Endothelial cell of umbilical vein (primary cell): ENCODE measurements at regions of chr10 and their contacts with region 1.

Region 1: DNA sequence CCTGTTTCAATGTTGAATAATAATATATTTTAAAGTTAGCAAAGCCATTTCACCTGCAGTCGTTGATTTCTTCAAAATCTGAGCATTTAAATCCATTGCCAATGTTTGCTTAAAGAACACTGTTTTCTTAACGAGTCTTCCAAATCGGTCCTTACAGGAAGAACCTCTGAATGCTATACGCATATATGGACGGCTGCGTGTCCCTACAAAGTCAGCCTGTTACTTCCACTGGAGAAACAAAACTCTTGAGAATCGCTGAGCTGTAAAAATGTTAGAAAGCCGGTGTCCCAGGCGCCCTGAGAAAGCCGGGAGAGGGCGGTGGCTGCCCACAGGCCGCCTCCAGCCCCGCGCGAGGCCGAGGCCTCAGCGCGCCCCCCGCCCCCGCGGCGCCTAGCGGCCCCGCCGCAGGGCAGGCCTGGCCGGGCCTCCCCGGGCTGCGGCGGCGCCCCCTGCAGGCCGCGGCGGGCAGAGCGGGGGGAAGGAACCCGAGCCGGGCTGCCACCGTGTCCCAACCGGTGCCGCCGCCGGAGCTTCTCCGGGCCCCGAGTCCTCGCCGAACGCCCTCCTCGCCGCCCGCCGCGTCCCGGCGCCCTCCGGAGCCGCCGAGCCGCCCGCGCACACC is at the start of gene FHIP2A:
- DNase-seq: peak; percentile 74
- H3K4me3 ChIP-seq: peak within 1 kb of the TSS; percentile 78 to 96 (median 86)
- H3K27ac ChIP-seq: peak within 1 kb of the TSS; percentile 97
- H3K4me1 ChIP-seq: peaks cover 35% of the 10 kb centered on the region
- H3K27me3 ChIP-seq: no peaks in the 10 kb centered on the region
- CTCF ChIP-seq: peak; percentile 53 to 60
- POLR2A ChIP-seq: peak; percentile 61
- total RNA-seq, gene FHIP2A: 34.8 and 39.6 TPM in 2 replicates

Region 2: GRCh38 chr10:114173921-114174694 is 647.3 kb before region 1 on chr10 and contains the start of gene CCDC186:
- CTCF ChIA-PET with region 1: no interaction called
- POLR2A ChIA-PET with region 1: no interaction called
- dilution Hi-C with region 1: no loop called
- intact Hi-C with region 1: loop called (anchors 5 kb)
- DNase-seq: peak; percentile 93
- H3K4me3 ChIP-seq: peak within 1 kb of the TSS; percentile 39 to 99 (median 66)
- H3K27ac ChIP-seq: peak within 1 kb of the TSS; percentile 49
- H3K4me1 ChIP-seq: peaks cover 18% of the 10 kb centered on the region
- H3K27me3 ChIP-seq: peaks cover 3 to 5% of the 10 kb centered on the region in 2 experiments
- CTCF ChIP-seq: no peak
- POLR2A ChIP-seq: peak; percentile 74
- total RNA-seq, gene CCDC186: 13.4 and 13.9 TPM in 2 replicates

Region 3: GRCh38 chr10:114526504-114527238 is 294.7 kb before region 1 on chr10:
- CTCF ChIA-PET with region 1: no interaction called
- POLR2A ChIA-PET with region 1: no interaction called
- dilution Hi-C with region 1: no loop called
- intact Hi-C with region 1: loop called (anchors 1 kb)
- DNase-seq: peak; percentile 97
- H3K4me3 ChIP-seq: peak overlapping the region in 2 of 3 experiments; percentile 38 to 41
- H3K27ac ChIP-seq: peak overlapping the region; percentile 35
- H3K4me1 ChIP-seq: peaks cover 18% of the 10 kb centered on the region
- H3K27me3 ChIP-seq: no peaks in the 10 kb centered on the region
- CTCF ChIP-seq: no peak
- POLR2A ChIP-seq: peak; percentile 69

Region 4: DNA sequence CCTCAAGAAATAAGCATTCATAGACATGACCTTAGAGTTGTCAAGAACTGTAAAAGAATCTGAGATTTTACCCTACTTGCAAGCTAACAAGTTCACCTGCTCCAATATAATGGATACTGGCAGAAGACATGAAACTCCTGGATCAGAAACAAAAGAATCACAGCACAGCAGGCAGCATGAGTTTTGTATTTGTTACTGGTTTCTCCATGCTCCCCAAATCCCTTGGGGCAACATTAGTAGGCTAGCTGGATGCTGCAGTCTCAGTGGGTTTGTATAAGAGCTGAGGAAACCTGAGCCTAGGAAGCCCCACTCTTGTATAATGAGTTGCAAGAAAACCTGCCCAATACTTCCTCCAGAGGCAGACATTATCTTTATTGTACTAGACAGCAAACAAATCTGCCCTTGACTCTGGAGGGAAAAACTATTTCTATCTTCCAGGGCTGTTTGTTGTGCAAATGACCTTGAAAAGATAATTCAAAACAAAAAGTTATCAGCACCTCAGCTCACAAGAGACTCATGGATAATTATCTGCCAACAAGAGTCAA is 228.1 kb before region 1 on chr10:
- CTCF ChIA-PET with region 1: no interaction called
- POLR2A ChIA-PET with region 1: no interaction called
- dilution Hi-C with region 1: no loop called
- intact Hi-C with region 1: no loop called
- DNase-seq: no peak
- H3K4me3 ChIP-seq: no peak overlapping the region
- H3K27ac ChIP-seq: no peak overlapping the region
- H3K4me1 ChIP-seq: no peaks in the 10 kb centered on the region
- H3K27me3 ChIP-seq: no peaks in the 10 kb centered on the region
- CTCF ChIP-seq: no peak
- POLR2A ChIP-seq: no peak

Region 5: GRCh38 chr10:114714281-114714741 is 107.1 kb before region 1 on chr10:
- CTCF ChIA-PET with region 1: interaction called, 8 read pairs
- POLR2A ChIA-PET with region 1: interaction called, 4 read pairs
- dilution Hi-C with region 1: no loop called
- intact Hi-C with region 1: loop called (anchors 2 kb)
- DNase-seq: peak; percentile 93
- H3K4me3 ChIP-seq: no peak overlapping the region
- H3K27ac ChIP-seq: peak overlapping the region; percentile 58
- H3K4me1 ChIP-seq: peaks cover 37% of the 10 kb centered on the region
- H3K27me3 ChIP-seq: no peaks in the 10 kb centered on the region
- CTCF ChIP-seq: no peak
- POLR2A ChIP-seq: no peak

Region 6: GRCh38 chr10:114856544-114857282 is 35.3 kb after region 1 on chr10:
- CTCF ChIA-PET with region 1: interaction called, 19 read pairs
- POLR2A ChIA-PET with region 1: interaction called, 5 read pairs
- dilution Hi-C with region 1: no loop called
- intact Hi-C with region 1: loop called (anchors 2 kb)
- DNase-seq: peak; percentile 81
- H3K4me3 ChIP-seq: peak overlapping the region in 1 of 3 experiments; percentile 38
- H3K27ac ChIP-seq: peak overlapping the region; percentile 94
- H3K4me1 ChIP-seq: peaks cover 32% of the 10 kb centered on the region
- H3K27me3 ChIP-seq: no peaks in the 10 kb centered on the region
- CTCF ChIP-seq: no peak
- POLR2A ChIP-seq: no peak

Region 7: GRCh38 chr10:114925587-114926586 is 104.5 kb after region 1 on chr10:
- CTCF ChIA-PET with region 1: no interaction called
- POLR2A ChIA-PET with region 1: no interaction called
- dilution Hi-C with region 1: no loop called
- intact Hi-C with region 1: loop called (anchors 5 kb)
- DNase-seq: peak; percentile 77
- H3K4me3 ChIP-seq: peak overlapping the region in 1 of 3 experiments; percentile 15
- H3K27ac ChIP-seq: peak overlapping the region; percentile 60
- H3K4me1 ChIP-seq: peaks cover 16% of the 10 kb centered on the region
- H3K27me3 ChIP-seq: no peaks in the 10 kb centered on the region
- CTCF ChIP-seq: no peak
- POLR2A ChIP-seq: no peak

Region 8: DNA sequence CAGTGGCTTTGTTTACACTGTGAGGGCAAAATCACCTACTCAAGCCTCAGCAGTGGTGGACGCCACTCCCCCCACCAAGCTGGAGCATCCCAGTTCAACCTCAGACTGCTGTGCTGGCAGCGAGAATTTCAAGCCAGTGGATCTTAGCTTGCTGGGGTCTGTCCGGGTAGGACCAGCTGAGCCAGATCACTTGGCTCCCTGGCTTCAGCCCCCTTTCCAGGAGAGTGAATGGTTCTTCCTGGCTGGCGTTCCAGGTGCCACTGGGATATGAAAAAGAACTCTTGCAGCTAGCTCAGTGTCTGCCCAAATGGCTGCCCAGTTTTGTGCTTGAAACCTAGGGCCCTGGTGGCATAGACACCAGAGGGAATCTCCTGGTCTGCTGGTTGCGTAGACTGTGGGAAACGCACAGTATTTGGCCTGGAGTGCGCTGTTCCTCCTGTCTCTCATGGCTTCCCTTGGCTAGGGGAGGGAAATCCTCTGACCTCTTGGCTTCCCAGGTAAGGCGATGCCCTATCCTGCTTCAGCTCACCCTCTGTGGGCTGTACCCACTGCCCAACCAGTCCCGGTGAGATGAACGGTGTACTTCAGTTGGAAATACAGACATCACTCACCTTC is 670.2 kb after region 1 on chr10:
- CTCF ChIA-PET with region 1: no interaction called
- POLR2A ChIA-PET with region 1: no interaction called
- dilution Hi-C with region 1: no loop called
- intact Hi-C with region 1: no loop called
- DNase-seq: no peak
- H3K4me3 ChIP-seq: no peak overlapping the region
- H3K27ac ChIP-seq: no peak overlapping the region
- H3K4me1 ChIP-seq: no peaks in the 10 kb centered on the region
- H3K27me3 ChIP-seq: no peaks in the 10 kb centered on the region
- CTCF ChIP-seq: no peak
- POLR2A ChIP-seq: no peak